ENCODE measurements at regions of chr17 and their contacts with region 1.

Region 1: DNA sequence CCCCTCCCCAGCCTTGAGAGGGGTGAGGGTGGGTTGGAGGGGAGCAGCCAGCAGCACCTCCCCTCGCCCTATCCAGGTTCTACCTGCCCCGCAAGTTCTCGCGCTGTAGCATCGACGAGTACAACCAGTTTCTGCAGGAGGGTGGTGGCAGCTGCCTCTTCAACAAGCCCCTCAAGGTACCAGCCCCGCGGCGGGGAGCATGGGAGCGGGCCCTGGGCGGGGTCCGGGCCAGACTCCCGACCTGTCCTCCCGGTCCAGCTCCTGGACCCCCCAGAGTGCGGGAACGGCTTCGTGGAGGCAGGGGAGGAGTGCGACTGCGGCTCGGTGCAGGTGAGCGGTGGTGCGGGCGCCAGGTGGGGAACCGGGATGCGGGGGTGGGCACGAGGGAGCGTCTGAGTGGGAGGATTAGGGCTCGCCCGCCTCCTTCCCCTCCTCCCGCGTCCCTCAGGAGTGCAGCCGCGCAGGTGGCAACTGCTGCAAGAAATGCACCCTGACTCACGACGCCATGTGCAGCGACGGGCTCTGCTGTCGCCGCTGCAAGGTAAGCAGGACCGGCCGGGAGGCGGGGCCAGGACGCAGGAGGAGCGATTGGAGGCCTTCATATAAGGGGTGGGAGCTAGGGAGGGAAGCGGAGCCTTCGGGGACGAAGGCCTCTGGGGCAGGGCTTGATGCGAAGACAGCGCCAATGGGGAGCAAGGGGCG is 16.5 kb downstream of the ADAM11 start:
- DNase-seq: no peak
- H3K4me3 Mint-ChIP-seq: peak overlapping the region; percentile 86
- H3K27ac Mint-ChIP-seq: peak overlapping the region; percentile 36
- H3K4me1 Mint-ChIP-seq: peaks cover 7% of the 10 kb centered on the region
- H3K27me3 Mint-ChIP-seq: peaks cover 51% of the 10 kb centered on the region
- CTCF ChIP-seq: no peak

Region 2: DNA sequence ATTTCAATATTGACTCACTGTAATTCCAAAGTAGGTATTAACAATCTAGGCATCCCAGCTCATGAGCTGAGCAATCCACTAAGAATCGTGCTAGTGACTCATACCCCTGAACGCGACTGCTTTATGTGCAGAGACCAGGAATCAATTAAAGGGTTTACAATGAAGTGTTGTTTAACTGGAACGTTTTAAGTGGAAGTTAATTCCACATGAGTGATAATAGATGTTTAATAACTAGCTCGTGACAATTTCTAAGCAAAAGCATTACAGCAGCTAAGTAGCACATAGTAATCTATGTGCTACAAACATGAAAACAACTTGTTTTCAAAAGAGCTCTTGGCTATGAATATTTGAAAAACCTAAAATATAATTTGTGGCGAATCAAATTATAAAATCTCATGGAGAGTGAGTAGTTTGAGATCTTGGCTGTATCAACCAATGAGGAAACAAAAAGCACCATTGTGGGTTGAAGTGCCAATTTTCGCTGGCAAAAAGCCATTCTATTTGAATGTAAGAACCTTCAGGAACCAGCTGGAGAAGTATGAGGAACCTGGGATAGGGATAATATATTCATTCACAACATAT is 45.4 kb after region 1 on chr17:
- CTCF ChIA-PET with region 1: interaction called, 13 read pairs
- intact Hi-C with region 1: no loop called
- DNase-seq: peak; percentile 74
- H3K4me3 Mint-ChIP-seq: peak overlapping the region; percentile 43
- H3K27ac Mint-ChIP-seq: peak overlapping the region; percentile 81
- H3K4me1 Mint-ChIP-seq: peaks cover 54% of the 10 kb centered on the region
- H3K27me3 Mint-ChIP-seq: no peaks in the 10 kb centered on the region
- CTCF ChIP-seq: no peak

Region 3: DNA sequence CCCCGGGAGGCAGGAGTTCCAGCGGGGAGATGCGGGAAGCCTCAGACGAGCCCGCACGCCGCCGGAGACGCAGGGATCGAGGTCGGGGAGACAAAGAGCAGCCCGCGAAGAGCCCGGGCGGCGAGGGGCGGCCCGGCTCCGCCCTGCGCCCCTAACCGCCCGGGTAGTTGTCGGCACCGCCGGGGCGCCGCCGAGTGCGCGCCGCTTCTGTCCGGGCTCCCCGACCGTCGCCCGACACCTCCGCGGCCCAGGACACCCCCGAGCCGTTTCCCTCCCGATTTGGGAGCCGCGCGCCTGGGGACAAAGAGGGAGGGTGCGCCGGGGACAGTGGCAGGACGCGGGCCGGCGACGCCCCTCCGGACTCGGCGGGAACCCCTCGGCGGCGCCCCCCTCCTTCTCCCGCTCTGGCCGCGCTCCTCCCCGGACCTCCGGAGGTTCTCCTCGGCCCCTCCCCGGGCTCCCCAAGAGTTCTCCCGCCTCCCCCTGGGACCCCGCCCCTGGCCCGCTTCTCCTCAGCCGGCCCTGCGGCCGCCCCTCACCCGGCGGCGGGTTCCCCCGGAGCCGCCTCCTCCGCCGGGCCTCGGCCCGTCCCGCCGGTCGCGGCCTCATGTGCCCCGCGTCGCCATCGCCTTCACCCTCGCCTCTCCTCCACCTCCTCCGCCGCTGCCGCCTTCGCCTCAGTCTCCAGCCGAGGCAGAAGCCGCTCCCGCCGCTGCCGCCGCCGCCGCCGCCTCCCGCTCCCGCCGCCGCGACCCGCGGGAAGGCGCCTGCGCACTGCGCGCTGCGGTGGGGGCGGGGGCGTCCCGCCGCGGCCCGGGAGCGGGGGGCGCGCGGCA is 54.5 kb after region 1 on chr17 and contains the start of gene GJC1:
- CTCF ChIA-PET with region 1: interaction called, 14 read pairs
- intact Hi-C with region 1: loop called (anchors 2 kb)
- DNase-seq: peak; percentile 74
- H3K4me3 Mint-ChIP-seq: peak within 1 kb of the TSS; percentile 99
- H3K27ac Mint-ChIP-seq: peak within 1 kb of the TSS; percentile 96
- H3K4me1 Mint-ChIP-seq: peaks cover 13% of the 10 kb centered on the region
- H3K27me3 Mint-ChIP-seq: no peaks in the 10 kb centered on the region
- CTCF ChIP-seq: no peak
- total RNA-seq, gene GJC1: 75.9 and 114 TPM in 2 replicates

Region 4: GRCh38 chr17:44837243-44837642 is 62.0 kb after region 1 on chr17:
- CTCF ChIA-PET with region 1: interaction called, 15 read pairs
- intact Hi-C with region 1: loop called (anchors 2 kb)
- DNase-seq: peak; percentile 24
- H3K4me3 Mint-ChIP-seq: no peak overlapping the region
- H3K27ac Mint-ChIP-seq: no peak overlapping the region
- H3K4me1 Mint-ChIP-seq: no peaks in the 10 kb centered on the region
- H3K27me3 Mint-ChIP-seq: no peaks in the 10 kb centered on the region
- CTCF ChIP-seq: no peak

Region 5: GRCh38 chr17:44864866-44865660 is 89.8 kb after region 1 on chr17:
- CTCF ChIA-PET with region 1: interaction called, 65 read pairs
- intact Hi-C with region 1: loop called (anchors 1 kb)
- DNase-seq: peak; percentile 87
- H3K4me3 Mint-ChIP-seq: no peak overlapping the region
- H3K27ac Mint-ChIP-seq: no peak overlapping the region
- H3K4me1 Mint-ChIP-seq: no peaks in the 10 kb centered on the region
- H3K27me3 Mint-ChIP-seq: no peaks in the 10 kb centered on the region
- CTCF ChIP-seq: peak; percentile 91

Region 6: GRCh38 chr17:44878627-44879221 is 103.4 kb after region 1 on chr17:
- CTCF ChIA-PET with region 1: interaction called, 27 read pairs
- intact Hi-C with region 1: no loop called
- DNase-seq: peak; percentile 52
- H3K4me3 Mint-ChIP-seq: no peak overlapping the region
- H3K27ac Mint-ChIP-seq: no peak overlapping the region
- H3K4me1 Mint-ChIP-seq: no peaks in the 10 kb centered on the region
- H3K27me3 Mint-ChIP-seq: no peaks in the 10 kb centered on the region
- CTCF ChIP-seq: peak; percentile 82

Measured in Calu3 (cell line).